PC-9 (cell line): ENCODE measurements at regions of chr2 and their contacts with region 1.

Region 1: DNA sequence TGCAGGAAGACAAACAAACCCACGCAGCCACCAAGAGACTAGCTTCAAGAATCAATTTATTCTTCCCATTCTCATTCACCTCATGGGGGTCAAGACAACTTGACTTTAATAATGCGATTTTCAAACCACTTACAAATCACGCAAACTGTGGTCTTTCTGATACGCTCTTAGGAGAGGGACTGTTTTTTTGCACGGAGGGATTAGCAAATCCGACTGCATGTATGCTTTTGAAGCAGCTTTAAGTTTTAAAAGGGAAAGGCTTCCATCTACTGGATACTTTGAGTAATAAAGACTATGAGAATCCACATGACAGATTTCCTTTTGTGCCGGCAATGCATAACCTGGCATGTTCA is 322.9 kb upstream of the KCNJ3 start:
- DNase-seq: no peak
- H3K4me3 ChIP-seq: no peak overlapping the region
- H3K27ac ChIP-seq: no peak overlapping the region
- H3K4me1 ChIP-seq: no peaks in the 10 kb centered on the region
- H3K27me3 ChIP-seq: no peaks in the 10 kb centered on the region
- CTCF ChIP-seq: peak; percentile 59

Region 2: GRCh38 chr2:152740743-152741328 is 1634.7 kb before region 1 on chr2:
- CTCF ChIA-PET with region 1: no interaction called
- POLR2A ChIA-PET with region 1: no interaction called
- intact Hi-C with region 1: loop called (anchors 10 kb)
- DNase-seq: peak in 1 of 2 experiments; percentile 62
- H3K4me3 ChIP-seq: no peak overlapping the region
- H3K27ac ChIP-seq: no peak overlapping the region
- H3K4me1 ChIP-seq: no peaks in the 10 kb centered on the region
- H3K27me3 ChIP-seq: no peaks in the 10 kb centered on the region
- CTCF ChIP-seq: peak; percentile 90

Region 3: GRCh38 chr2:153163058-153163457 is 1212.5 kb before region 1 on chr2:
- CTCF ChIA-PET with region 1: no interaction called
- POLR2A ChIA-PET with region 1: no interaction called
- intact Hi-C with region 1: loop called (anchors 10 kb)
- DNase-seq: no peak
- H3K4me3 ChIP-seq: no peak overlapping the region
- H3K27ac ChIP-seq: no peak overlapping the region
- H3K4me1 ChIP-seq: no peaks in the 10 kb centered on the region
- H3K27me3 ChIP-seq: no peaks in the 10 kb centered on the region
- CTCF ChIP-seq: peak; percentile 71

Region 4: GRCh38 chr2:153871231-153872221 is 504.0 kb before region 1 on chr2 and contains the start of gene GALNT13:
- CTCF ChIA-PET with region 1: no interaction called
- POLR2A ChIA-PET with region 1: no interaction called
- intact Hi-C with region 1: loop called (anchors 5 kb)
- DNase-seq: peak; percentile 76 to 84
- H3K4me3 ChIP-seq: peak within 1 kb of the TSS; percentile 85
- H3K27ac ChIP-seq: 0 out of 2 replicates have a peak within 1 kb of the TSS, but pooled peaks have one; percentile 34
- H3K4me1 ChIP-seq: no peaks in the 10 kb centered on the region
- H3K27me3 ChIP-seq: no peaks in the 10 kb centered on the region
- CTCF ChIP-seq: no peak
- total RNA-seq, gene GALNT13: 3.6 and 4.0 TPM in 2 replicates